Activated naive CD8-positive, alpha-beta T cell treated with anti-CD3 and anti-CD28 coated beads, Interleukin-2, amount 10 ng/mL, durations not matched to agents 7 days and 5 days (primary cell): ENCODE measurements at regions of chr4 and their contacts with region 1.

Region 1: GRCh38 chr4:127965062-127965802 is at the starts of genes ABHD18 and MFSD8:
- DNase-seq: peak; percentile 98
- ATAC-seq: peak; percentile 96
- H3K4me3 Mint-ChIP-seq: peak within 1 kb of the TSS; percentile 93
- H3K27ac Mint-ChIP-seq: peak within 1 kb of the TSS; percentile 95
- H3K4me1 Mint-ChIP-seq: peaks cover 29% of the 10 kb centered on the region
- H3K27me3 Mint-ChIP-seq: no peaks in the 10 kb centered on the region
- total RNA-seq, gene ABHD18: 23.3 to 27.4 TPM
- total RNA-seq, gene MFSD8: 27.4 to 28.5 TPM

Region 2: DNA sequence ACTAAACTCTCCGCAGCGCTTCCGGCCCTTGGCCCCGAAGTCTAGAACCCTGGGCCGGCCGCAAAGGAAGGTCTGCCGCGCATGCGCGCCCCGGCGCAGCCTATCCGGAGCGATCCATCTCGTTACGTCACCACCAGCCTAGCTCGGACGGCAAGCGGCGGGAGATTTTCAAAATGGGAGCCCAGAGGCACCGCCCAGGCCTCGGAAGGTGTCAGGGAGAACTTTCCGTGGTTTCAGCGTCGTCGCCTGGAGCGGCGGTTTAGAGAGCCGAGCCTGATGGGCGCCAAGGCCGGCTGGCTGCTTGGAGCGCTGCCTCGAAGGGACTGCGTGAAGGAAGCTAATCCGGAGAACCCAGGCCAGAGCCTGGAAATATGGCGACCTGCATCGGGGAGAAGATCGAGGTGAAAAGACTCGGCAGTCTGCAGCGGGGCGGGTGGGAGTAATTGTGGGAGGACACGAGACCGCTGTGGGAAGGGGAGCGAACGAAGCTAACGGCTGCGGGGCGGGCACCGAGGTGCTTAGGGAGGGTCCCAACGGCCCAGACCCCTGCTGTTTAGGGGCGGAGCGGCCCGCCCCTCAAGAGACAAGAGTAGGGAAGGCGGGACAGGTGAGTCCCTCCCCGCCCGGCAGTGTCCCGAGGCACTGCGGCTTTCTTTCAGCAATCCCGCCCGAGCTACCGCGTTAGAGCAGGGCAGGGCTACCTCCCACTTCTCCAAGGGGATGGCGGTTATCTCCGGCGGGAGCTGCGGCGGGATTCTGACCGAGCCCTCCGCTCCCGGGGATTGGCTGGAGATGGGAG is 84.3 kb before region 1 on chr4 and contains the start of gene PLK4:
- POLR2A ChIA-PET with region 1: interaction called, 56 read pairs
- DNase-seq: peak; percentile 95
- ATAC-seq: peak; percentile 97
- H3K4me3 Mint-ChIP-seq: peak within 1 kb of the TSS; percentile 92
- H3K27ac Mint-ChIP-seq: peak within 1 kb of the TSS; percentile 97
- H3K4me1 Mint-ChIP-seq: peaks cover 28% of the 10 kb centered on the region
- H3K27me3 Mint-ChIP-seq: no peaks in the 10 kb centered on the region
- total RNA-seq, gene PLK4: 35.5 to 39.4 TPM

Region 3: DNA sequence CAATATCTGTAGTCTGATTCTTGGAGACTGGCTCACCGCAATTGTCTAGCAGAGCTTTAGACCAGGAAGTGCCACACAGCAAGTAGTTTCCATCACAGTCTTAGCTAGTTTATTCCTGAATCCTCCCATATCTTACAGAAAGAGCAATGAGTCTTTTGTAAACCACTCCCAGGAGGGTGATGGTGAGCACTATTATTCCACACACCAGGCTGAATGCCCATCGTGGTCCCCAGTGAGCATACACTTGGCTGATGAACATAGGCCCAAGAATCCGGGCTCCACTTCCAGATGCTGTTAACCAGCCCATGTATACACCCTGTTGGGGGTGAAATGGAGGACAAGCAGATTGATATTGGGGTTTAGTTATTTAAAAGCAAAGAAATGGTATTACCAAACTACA is 44.7 kb before region 1 on chr4:
- POLR2A ChIA-PET with region 1: no interaction called
- DNase-seq: no peak
- ATAC-seq: no peak
- H3K4me3 Mint-ChIP-seq: no peak overlapping the region
- H3K27ac Mint-ChIP-seq: no peak overlapping the region
- H3K4me1 Mint-ChIP-seq: no peaks in the 10 kb centered on the region
- H3K27me3 Mint-ChIP-seq: no peaks in the 10 kb centered on the region

Region 4: GRCh38 chr4:128060699-128061565 is 95.7 kb after region 1 on chr4 and contains the start of gene LARP1B:
- POLR2A ChIA-PET with region 1: interaction called, 44 read pairs
- DNase-seq: peak; percentile 94
- ATAC-seq: peak; percentile 92
- H3K4me3 Mint-ChIP-seq: peak within 1 kb of the TSS; percentile 85
- H3K27ac Mint-ChIP-seq: peak within 1 kb of the TSS; percentile 87
- H3K4me1 Mint-ChIP-seq: peaks cover 9% of the 10 kb centered on the region
- H3K27me3 Mint-ChIP-seq: peaks cover 3% of the 10 kb centered on the region
- total RNA-seq, gene LARP1B: 12.8 to 13.2 TPM

Region 5: DNA sequence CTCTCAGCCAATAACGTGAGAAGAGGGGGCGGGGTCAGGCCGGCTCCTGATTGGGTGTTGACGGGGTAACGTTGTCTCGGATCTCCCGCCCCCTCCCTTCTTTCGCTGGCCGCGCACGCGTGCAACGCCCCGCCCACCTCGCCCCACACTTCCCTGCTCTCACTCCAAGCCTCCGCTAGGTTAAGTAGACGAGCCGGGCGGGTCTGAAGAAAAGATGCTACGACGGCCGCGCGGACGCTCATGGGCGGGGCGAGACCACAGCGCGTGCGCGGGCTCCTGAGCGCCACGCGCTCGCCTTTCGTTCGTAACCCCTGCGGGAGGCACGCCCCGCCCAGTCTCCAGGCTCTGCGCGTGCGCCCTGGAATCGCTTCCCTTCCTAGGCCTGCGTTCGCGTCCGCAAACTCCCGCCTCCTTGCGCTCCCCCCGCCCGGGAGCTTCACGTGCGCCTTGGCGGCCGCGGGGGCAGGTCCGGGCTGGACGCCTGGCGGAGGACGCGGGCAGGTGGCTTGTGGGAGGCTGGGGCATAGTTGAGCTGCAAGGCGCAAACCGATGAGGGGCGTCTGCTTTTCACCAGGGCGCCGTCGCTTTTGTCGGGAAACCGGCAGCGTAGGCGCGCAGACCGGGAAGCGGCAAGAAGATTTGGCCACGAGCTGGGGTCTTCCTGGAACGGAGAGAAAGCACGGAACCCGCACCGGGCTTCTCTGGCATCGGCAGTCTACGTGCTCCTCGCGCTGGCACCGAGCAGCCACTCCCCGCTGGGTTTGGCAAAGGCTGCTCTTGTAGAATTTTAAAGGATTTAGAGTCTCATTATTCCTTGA is 322.8 kb after region 1 on chr4:
- POLR2A ChIA-PET with region 1: interaction called, 14 read pairs
- DNase-seq: peak; percentile 98
- ATAC-seq: peak; percentile 89
- H3K4me3 Mint-ChIP-seq: peak overlapping the region; percentile 92
- H3K27ac Mint-ChIP-seq: peak overlapping the region; percentile 92
- H3K4me1 Mint-ChIP-seq: peaks cover 28% of the 10 kb centered on the region
- H3K27me3 Mint-ChIP-seq: no peaks in the 10 kb centered on the region